Activated CD8-positive, alpha-beta T cell treated with anti-CD3 and anti-CD28 coated beads, Interleukin-2, amount 10 ng/mL, durations not matched to agents 7 days and 5 days (primary cell): ENCODE measurements at regions of chr22 and their contacts with region 1.

Region 1: DNA sequence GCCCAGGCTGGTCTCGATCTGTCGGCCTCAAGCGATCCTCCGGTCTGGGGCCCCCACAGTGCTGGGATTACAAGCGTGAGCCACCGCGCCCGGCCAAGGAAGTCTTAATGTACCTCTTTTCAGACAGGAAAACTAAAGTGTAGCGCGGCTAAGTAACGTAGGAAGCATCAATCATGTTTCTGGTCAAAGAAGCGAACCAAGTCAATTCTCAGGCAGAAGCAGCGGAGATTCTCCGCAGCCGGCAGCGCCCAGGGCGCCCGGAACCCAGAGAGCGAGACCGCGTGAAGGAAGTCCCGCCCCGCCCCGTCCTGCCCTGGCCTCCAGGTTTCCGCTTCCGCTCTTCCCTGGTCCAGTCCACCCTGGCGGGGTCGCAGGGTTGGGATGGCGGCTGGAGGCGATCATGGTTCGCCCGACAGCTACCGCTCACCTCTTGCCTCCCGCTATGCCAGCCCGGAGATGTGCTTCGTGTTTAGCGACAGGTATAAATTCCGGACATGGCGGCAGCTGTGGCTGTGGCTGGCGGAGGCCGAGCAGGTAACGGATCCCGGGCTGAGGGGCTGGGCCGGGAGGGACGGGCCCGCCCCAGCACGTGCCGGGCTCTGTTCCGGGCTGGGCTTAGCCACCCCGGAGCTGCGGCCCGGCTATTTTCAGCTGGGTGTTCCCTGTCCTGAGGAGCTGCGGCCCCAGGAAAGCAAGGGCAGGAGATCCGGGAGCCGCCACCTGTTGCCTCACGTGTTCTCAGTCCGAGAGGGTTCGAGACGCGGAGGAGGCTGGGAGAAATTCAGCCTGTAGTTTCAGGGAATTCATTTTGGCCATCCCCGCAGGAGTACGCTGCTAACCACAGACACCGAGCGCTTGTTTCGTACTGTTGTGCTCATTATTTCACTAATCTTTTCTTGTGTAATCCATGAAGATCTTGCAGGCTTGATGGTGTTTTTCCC is at the start of gene ADSL:
- DNase-seq: peak; percentile 90
- ATAC-seq: peak; percentile 91
- H3K4me3 Mint-ChIP-seq: peak within 1 kb of the TSS; percentile 94
- H3K27ac Mint-ChIP-seq: peak within 1 kb of the TSS; percentile 97
- H3K4me1 Mint-ChIP-seq: peaks cover 52% of the 10 kb centered on the region
- H3K27me3 Mint-ChIP-seq: no peaks in the 10 kb centered on the region
- total RNA-seq, gene ADSL: 109 to 118 TPM

Region 2: DNA sequence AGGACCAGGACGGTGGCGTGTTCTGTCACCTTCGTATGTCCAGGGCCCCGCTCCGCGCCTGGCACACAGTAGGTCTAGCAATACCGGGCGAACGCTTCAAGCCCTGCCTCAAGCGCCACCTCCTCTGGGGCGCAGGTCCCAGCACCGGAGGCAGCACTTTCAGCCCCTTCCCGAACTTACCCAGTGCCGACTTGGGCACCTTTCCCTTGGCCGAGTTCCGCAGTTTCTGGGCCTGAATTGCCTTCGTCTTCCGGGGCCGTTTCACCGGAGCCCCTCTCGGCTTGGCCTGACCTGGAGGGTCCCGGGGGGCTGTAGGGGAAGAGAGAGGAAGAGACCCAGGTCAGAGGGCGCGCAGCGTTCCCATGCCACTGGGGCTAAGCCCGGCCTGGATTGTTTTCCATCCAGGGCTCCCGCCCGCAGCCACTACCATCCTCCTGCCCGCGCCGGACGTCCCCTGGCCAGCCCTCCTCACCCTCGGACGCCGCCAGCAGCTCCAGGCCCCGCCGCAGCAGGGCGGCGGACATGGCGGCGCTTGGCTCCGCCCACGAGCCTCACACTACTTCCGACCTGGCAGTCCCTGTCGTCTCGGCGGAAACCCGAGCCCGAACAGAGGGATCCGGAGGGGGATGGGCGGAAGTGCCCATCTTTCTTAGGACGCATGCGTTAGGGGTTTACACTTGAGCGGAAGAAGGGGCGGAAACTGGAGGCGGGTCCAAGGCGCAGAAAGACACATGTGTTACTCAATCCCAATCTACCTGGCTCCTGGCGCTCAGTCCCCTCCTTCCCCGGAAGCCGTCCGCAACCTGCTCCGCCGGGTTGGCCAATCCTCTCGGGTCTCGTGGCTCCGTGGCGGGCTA is 814.0 kb before region 1 on chr22 and contains the start of gene RPS19BP1:
- CTCF ChIA-PET with region 1: interaction called, 13 read pairs
- POLR2A ChIA-PET with region 1: no interaction called
- DNase-seq: peak; percentile 100
- ATAC-seq: peak; percentile 88
- H3K4me3 Mint-ChIP-seq: peak within 1 kb of the TSS; percentile 98
- H3K27ac Mint-ChIP-seq: peak within 1 kb of the TSS; percentile 94
- H3K4me1 Mint-ChIP-seq: peaks cover 60% of the 10 kb centered on the region
- H3K27me3 Mint-ChIP-seq: no peaks in the 10 kb centered on the region
- total RNA-seq, gene RPS19BP1: 80.1 to 80.2 TPM

Region 3: GRCh38 chr22:40044102-40044869 is 302.2 kb before region 1 on chr22:
- CTCF ChIA-PET with region 1: interaction called, 38 read pairs
- POLR2A ChIA-PET with region 1: interaction called, 49 read pairs
- DNase-seq: peak; percentile 99
- ATAC-seq: peak; percentile 90
- H3K4me3 Mint-ChIP-seq: peak overlapping the region; percentile 89
- H3K27ac Mint-ChIP-seq: peak overlapping the region; percentile 99
- H3K4me1 Mint-ChIP-seq: peaks cover 42% of the 10 kb centered on the region
- H3K27me3 Mint-ChIP-seq: peaks cover 8% of the 10 kb centered on the region

Region 4: GRCh38 chr22:40177738-40178416 is 168.6 kb before region 1 on chr22 and contains the start of gene TNRC6B:
- CTCF ChIA-PET with region 1: interaction called, 17 read pairs
- POLR2A ChIA-PET with region 1: interaction called, 32 read pairs
- DNase-seq: peak; percentile 91
- ATAC-seq: peak; percentile 80
- H3K4me3 Mint-ChIP-seq: peak within 1 kb of the TSS; percentile 94
- H3K27ac Mint-ChIP-seq: peak within 1 kb of the TSS; percentile 91
- H3K4me1 Mint-ChIP-seq: peaks cover 48% of the 10 kb centered on the region
- H3K27me3 Mint-ChIP-seq: no peaks in the 10 kb centered on the region
- total RNA-seq, gene TNRC6B: 62.9 to 63.3 TPM

Region 5: DNA sequence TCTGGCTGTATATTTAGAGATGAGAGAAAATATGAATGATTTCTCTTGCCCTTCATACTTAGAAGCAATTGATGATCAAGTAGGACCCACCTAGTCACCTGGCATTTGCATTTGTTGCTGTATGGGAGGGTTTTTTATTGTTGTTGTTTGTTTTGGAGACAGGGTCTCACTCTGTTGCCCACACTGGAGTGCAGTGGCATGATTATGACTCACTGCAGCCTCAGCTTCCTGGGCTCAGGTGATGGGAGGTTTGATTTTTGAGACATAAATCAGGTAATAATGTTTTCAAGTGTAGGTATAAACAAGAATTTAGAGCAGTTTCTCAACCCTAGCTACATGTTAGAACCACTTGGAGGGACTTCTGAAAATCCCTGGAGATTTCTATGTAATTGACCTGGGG is 105.8 kb before region 1 on chr22:
- CTCF ChIA-PET with region 1: interaction called, 11 read pairs
- POLR2A ChIA-PET with region 1: no interaction called
- DNase-seq: peak; percentile 33
- ATAC-seq: peak; percentile 65
- H3K4me3 Mint-ChIP-seq: no peak overlapping the region
- H3K27ac Mint-ChIP-seq: peak overlapping the region; percentile 72
- H3K4me1 Mint-ChIP-seq: peaks cover 75% of the 10 kb centered on the region
- H3K27me3 Mint-ChIP-seq: no peaks in the 10 kb centered on the region

Region 6: DNA sequence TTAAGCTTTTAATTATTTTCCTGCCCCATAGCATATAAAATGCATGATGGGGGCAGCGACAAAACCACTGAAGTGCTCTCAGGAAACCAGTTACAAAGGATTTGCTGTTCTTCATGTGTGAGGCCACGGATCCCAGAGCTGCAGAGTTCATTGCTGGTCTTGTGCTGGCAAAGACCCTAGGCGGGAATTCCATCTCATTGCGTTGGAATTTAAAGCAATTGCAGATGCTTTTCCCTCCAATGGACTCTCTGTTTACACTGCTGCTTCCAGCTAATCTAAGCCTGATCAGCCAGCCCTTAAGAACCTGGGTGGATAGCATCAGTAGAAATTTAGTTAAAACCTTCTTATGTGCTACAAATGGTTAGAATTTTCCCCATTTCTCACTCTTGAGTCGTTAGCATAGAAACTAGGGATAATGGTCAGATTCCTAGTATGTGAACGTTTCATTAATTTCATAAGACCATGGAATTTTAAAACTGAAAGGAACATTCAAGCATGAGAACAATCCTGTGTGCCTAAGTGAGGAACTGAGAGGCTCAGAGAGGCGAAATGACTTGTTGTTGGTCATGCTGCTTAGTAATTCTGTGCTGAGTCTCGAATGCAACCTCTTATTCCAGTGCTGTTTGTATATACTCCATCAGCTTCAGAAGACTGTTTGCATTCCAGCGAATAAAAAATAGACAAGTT is 36.2 kb before region 1 on chr22:
- CTCF ChIA-PET with region 1: interaction called, 25 read pairs
- POLR2A ChIA-PET with region 1: interaction called, 3 read pairs
- DNase-seq: no peak
- ATAC-seq: no peak
- H3K4me3 Mint-ChIP-seq: no peak overlapping the region
- H3K27ac Mint-ChIP-seq: no peak overlapping the region
- H3K4me1 Mint-ChIP-seq: peaks cover 28% of the 10 kb centered on the region
- H3K27me3 Mint-ChIP-seq: no peaks in the 10 kb centered on the region

Region 7: DNA sequence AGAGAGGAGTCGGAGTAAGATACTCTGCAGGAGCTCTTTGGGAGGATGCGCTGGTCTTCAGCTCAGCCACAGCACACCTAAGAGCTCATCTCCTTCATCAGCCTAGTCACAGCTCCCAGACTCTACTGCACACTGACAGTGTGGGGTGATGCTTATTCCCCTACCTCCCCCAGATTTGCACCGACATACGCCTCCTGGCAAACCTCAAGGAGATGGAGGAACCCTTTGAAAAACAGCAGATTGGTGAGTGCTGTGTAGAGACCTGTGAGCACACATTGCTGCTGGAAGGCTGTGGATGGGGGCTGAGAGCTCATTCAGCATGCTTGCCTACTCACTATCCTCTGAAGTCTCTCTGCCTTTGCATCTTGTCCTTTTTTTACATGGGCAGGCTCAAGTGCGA is 14.7 kb after region 1 on chr22:
- CTCF ChIA-PET with region 1: interaction called, 11 read pairs
- POLR2A ChIA-PET with region 1: no interaction called
- DNase-seq: no peak
- ATAC-seq: no peak
- H3K4me3 Mint-ChIP-seq: no peak overlapping the region
- H3K27ac Mint-ChIP-seq: no peak overlapping the region
- H3K4me1 Mint-ChIP-seq: peaks cover 5% of the 10 kb centered on the region
- H3K27me3 Mint-ChIP-seq: no peaks in the 10 kb centered on the region

Region 8: DNA sequence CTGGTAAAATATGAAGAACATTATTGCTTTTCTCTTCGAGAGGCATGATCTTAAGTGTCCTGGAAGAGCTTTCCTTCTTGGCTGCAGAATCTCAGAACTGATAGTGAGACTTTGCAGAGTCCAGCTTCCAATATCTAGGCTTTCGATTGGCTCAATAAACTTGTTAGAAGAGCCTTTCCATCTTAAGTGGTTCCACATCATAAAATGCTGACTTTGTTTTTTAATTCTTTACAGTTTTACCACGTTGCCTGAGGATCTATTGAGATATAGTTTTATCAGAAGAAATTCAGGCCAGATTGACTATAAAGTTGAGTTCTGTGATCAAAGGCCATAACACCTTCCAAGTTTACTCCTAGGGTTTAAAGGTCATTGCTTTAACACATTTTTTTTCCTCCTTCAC is 531.0 kb after region 1 on chr22:
- CTCF ChIA-PET with region 1: no interaction called
- POLR2A ChIA-PET with region 1: no interaction called
- DNase-seq: no peak
- ATAC-seq: no peak
- H3K4me3 Mint-ChIP-seq: no peak overlapping the region
- H3K27ac Mint-ChIP-seq: no peak overlapping the region
- H3K4me1 Mint-ChIP-seq: no peaks in the 10 kb centered on the region
- H3K27me3 Mint-ChIP-seq: no peaks in the 10 kb centered on the region